ENCODE measurements at regions of chr4 and their contacts with region 1.

Region 1: DNA sequence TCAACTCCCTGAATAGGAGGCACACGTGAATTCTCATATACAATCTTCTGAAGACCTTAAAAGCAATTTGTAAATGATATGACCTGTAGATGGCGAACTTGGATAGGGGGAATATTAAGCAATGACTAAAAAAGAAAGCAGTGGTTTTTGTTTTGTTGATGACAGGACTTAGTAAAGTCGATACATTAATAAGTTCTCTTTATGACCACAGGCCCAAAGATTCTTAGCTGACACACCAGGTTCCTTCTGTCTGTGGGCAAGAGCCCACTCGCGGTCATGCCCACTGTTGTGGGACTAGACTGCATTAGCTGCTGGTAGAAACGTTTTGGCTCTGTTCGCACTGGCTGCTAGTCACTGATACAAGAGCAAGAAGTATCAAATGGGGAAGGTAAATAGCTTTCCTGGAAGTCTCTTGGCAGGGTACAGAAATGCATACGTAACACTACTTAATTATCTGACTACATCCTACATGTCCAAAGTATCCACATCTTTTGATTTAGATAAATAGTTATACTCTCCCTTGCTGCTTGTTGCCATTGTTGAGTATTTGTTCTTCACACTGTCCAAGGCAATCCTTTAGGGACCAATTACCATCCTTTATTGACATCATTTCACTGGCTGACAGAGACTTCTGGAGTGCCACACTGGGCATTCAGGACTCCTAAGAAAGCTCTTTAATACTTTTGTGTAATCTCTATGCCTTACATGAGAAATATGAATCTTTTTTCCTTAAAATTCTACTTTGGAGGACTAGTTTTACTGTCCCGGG is 31.0 kb downstream of the ALPK1 start:
- DNase-seq: peak; percentile 31
- H3K4me3 ChIP-seq: no peak overlapping the region
- CTCF ChIP-seq: peak; percentile 22

Region 2: DNA sequence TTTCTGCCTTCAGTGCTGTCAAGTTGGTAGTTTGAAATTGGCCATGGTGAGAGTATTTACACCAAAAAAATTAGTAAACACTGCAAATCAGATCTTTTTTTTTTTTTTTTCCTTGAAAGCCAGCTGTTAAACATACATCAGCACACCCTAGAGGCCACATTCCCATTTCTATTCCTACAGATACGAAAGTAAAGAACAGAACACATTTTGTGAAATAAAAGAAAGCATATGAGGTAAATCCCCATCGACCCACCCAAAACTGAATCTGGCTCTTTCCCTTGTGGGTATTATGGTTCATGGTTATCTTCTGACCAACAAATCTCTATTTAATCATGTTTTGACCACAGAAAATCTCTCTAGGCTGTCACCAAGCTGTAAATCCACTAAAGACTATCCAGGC is 138.4 kb before region 1 on chr4:
- CTCF ChIA-PET with region 1: no interaction called
- POLR2A ChIA-PET with region 1: no interaction called
- DNase-seq: no peak
- H3K4me3 ChIP-seq: no peak overlapping the region
- CTCF ChIP-seq: no peak

Region 3: GRCh38 chr4:112340027-112340426 is 11.9 kb after region 1 on chr4:
- CTCF ChIA-PET with region 1: interaction called, 26 read pairs
- POLR2A ChIA-PET with region 1: no interaction called
- DNase-seq: no peak
- H3K4me3 ChIP-seq: no peak overlapping the region
- CTCF ChIP-seq: no peak

Region 4: GRCh38 chr4:112523764-112524505 is 195.8 kb after region 1 on chr4:
- CTCF ChIA-PET with region 1: interaction called, 37 read pairs
- POLR2A ChIA-PET with region 1: no interaction called
- DNase-seq: no peak
- H3K4me3 ChIP-seq: peak overlapping the region; percentile 52
- CTCF ChIP-seq: peak; percentile 81

Region 5: DNA sequence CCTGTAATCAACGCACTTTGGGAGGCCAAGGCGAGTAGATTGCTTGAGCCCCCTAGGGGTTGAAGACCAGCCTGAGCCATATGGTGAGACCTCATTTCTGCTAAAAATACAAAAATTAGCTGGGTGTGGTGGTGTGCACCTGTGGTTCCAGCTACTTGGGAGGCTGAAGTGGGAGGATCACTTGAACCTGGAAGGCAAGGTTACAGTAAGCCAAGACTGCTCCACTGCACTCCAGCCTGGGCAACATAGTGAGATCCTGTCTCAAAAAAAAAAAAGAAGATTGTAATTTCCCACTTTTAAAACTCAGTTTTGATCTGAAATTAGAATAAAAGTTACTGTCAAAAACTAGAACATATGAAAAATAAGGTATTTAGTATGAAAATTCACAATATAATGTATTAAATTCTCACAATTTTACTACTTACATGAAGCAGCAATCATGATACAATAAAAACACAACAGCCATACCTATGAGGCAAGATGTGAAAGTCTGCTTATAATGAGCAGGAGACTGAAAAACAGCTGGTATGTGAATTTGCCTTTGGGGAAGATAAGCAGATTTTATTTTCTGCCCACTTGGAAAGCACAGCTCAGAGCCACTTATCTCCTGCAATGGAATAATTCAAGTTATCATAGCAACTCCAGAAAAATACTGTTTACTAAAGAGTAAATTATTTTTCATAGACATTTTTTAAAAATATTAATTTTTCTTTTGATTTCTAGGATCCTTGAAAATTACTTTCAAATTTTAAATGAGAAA is 258.0 kb after region 1 on chr4:
- CTCF ChIA-PET with region 1: interaction called, 17 read pairs
- POLR2A ChIA-PET with region 1: no interaction called
- DNase-seq: no peak
- H3K4me3 ChIP-seq: no peak overlapping the region
- CTCF ChIP-seq: no peak

Measured in AG04449 (cell line).